ENCODE measurements at regions of chr17 and their contacts with region 1.

Region 1: DNA sequence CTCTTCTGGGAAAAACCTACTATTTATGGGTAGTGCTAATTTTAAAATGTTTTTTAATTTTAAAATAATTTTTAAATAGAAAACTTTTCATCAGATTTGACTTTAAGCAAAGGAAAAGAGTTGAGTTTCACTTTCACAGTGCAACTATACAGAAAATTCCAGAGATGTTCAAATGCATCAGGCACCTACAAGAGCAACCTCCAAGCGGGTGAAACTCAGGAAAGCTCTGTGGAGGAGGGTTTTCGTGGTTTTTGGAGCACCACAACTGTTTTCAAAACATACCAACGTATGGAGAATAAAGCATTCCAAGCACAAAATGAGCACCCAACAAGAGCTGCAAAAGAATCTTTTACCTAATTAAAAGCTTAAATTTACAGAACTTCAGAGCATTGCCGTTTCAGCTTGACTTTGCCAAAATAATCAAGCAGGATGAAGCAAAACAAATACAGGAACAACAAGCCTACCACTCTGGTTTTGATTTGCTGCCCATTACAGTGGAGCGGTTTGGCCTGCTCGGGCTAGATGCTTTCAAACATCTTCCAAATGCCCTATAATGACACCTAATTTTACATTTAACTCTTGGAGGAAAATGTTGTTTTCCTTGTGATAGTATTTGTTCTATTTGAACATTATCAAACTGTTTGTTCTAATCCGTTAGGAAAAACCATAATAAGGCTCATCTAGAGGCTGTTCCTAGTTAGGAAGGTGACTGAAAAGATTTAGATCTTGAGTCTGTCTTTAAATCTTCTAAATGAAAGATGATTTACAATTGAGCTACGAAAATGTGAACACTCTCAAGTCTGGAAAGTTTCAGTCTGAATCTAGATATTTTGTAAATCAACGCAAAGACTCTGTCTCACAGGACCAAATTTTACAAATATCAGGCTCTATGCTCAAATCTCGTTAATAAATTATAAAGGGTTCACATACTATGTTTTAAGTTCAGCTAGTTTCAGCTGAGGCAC is 34.5 kb downstream of the NACA2 start:
- DNase-seq: no peak
- ATAC-seq: peak in 1 of 2 experiments; percentile 42; a peak in 1 of 6 replicates
- H3K4me3 ChIP-seq: peak overlapping the region; percentile 10; the same call in 1 of the 3 replicates
- H3K27ac ChIP-seq: peak overlapping the region; percentile 34 to 60
- H3K4me1 ChIP-seq: peaks cover 26% of the 10 kb centered on the region
- CTCF ChIP-seq: no peak
- EP300 ChIP-seq: no peak
- POLR2A ChIP-seq: no peak
- RAD21 ChIP-seq: no peak

Region 2: DNA sequence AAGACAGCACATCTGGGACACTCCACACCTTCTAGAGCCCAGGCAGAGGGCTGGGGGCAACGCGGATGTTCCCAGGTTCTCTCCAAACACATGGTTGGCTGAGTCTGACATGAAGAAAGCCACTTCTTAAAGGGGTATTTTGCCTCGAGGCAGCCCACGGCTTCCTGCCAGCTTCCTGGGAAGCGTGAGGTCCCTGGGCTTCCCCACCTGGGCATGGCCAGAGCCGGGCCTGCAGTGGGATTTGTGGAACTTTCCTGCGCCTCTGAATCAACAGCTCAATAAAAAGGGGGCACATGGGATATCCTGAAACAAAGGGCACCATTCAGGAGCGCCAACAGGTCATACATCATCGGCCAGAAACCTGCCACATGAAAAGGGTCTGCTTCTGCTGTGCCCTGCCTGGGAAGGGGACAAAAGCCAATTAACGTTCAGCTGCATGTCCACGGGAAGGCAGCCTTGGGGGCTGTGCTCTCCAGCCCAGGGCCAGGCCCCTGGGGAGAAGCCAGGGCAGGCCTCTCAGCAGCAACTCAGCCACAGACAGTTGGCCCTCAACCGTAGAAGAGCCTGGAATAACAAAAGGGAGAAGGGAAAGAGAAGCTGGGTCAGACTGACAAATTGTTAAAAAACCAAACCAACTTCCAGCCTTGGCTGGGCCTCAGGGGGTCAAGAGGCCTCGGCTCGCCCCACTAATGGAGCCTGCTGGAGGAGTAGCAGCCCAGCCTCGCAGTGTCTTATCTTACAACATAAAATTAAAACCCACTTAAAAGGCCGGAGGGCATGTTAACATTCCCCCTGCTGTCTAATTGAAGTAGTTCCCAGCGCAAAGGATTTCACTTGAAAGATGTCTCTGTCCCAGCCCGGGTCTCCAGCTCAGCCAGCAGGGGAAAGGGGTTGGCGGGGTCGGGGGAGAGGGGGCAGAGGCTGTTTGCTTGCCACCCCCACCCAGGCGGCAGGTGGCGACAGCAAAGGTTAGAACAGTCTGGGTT is 70.1 kb before region 1 on chr17:
- CTCF ChIA-PET with region 1: no interaction called
- POLR2A ChIA-PET with region 1: no interaction called
- DNase-seq: no peak
- ATAC-seq: no peak
- H3K4me3 ChIP-seq: no peak overlapping the region
- H3K27ac ChIP-seq: no peak overlapping the region; a peak in 1 of 6 replicates
- H3K4me1 ChIP-seq: peaks cover 27% of the 10 kb centered on the region
- CTCF ChIP-seq: no peak
- EP300 ChIP-seq: no peak
- POLR2A ChIP-seq: no peak
- RAD21 ChIP-seq: no peak

Region 3: DNA sequence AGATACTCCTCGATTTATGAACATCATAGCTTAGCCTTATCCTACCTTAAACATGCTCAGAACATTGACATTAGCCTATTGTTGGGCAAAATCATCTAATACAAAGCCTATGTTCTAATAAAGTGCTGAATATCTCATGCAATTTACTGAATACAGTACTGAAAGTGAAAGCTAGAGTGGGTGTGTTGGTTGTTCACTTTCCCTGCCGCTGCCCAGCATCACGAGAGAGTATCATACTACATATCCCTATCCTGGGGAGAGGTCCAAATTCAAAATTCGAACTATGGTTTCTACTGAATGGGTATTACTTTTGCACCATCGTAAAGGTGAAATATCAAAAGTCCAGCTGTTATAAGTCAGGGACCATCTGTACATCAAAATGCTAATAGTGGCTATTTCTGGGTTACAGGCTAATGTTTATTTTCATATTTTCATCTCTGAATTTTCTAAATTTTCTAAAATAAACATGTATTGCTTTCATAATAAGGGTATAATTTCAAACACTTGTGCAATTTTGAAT is 20.0 kb before region 1 on chr17:
- CTCF ChIA-PET with region 1: no interaction called
- POLR2A ChIA-PET with region 1: no interaction called
- DNase-seq: no peak
- ATAC-seq: no peak
- H3K4me3 ChIP-seq: no peak overlapping the region
- H3K27ac ChIP-seq: no peak overlapping the region
- H3K4me1 ChIP-seq: no peaks in the 10 kb centered on the region
- CTCF ChIP-seq: no peak
- EP300 ChIP-seq: no peak
- POLR2A ChIP-seq: no peak
- RAD21 ChIP-seq: no peak

Region 4: GRCh38 chr17:61574542-61575174 is 18.2 kb after region 1 on chr17:
- CTCF ChIA-PET with region 1: interaction called, 29 read pairs
- POLR2A ChIA-PET with region 1: interaction called, 12 read pairs
- DNase-seq: peak; percentile 80 to 88
- ATAC-seq: peak; percentile 98 to 99
- H3K4me3 ChIP-seq: no peak overlapping the region
- H3K27ac ChIP-seq: peak overlapping the region; percentile 57 to 72
- H3K4me1 ChIP-seq: peaks cover 16% of the 10 kb centered on the region
- CTCF ChIP-seq: peak; percentile 89
- EP300 ChIP-seq: no peak
- POLR2A ChIP-seq: no peak
- RAD21 ChIP-seq: peak; percentile 98